ENCODE measurements at regions of chr9 and their contacts with region 1.

Region 1: DNA sequence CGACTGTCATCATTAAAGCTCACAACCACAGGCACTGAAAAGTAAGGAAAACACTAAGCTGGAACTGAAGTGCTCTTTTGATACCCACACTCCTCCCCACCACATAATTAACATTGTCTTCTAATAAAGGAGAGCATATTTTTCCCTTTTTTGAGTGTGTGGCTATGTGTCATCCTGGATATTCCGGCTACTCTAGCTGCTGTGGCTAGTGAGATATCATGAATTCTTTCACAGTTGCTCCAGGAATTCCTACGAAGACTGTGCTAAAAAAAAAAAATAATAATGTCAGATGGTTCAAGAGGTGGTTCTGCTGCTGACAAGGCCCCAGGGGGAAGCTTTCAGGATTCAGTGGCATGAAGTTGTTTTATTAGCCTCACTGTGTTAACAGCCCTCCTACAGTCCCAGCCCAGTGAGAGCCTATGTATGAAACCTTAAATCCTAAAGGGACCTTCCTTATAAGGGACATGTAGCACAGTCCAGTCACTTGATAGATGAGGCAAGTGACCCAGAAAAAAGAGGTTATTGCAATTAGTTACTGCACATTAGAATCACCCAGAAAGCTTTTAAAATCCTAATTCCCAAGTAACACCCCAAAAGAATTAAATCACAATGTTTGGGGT is 46.6 kb downstream of the TMEM252 start:
- DNase-seq: no peak
- ATAC-seq: peak; percentile 49
- H3K4me3 ChIP-seq: no peak overlapping the region
- H3K27ac ChIP-seq: peak overlapping the region; percentile 28 to 81
- H3K4me1 ChIP-seq: peaks cover 5 to 6% of the 10 kb centered on the region in 2 donors
- H3K27me3 ChIP-seq: no peaks in the 10 kb centered on the region

Region 2: DNA sequence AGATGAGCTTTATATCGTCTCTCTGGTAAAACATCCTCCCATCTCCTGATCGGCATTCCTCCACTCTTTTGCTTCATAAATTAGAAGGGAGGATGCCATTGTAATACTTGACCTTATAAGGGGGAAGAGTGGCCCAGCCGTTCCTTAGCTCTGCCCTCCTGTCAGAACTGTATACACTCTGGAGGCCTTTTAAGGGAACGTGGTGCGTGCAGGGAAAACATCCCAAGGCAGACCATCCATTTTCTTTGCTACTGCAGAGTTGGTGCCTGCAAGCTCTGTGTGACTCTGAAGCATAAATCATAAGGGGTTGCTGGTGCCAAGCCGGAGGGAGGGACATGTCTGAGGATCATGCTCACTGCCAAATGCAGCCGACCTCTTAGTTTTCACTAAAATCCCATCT is 47.2 kb before region 1 on chr9:
- intact Hi-C with region 1: loop called in 1 of 2 experiments (anchors 10 kb)
- DNase-seq: peak; percentile 68 to 78
- ATAC-seq: peak; percentile 77
- H3K4me3 ChIP-seq: no peak overlapping the region
- H3K27ac ChIP-seq: peak overlapping the region; percentile 73 to 74
- H3K4me1 ChIP-seq: peaks cover 11 to 14% of the 10 kb centered on the region in 2 donors
- H3K27me3 ChIP-seq: no peaks in the 10 kb centered on the region

Region 3: GRCh38 chr9:68462105-68462775 is 31.8 kb before region 1 on chr9:
- intact Hi-C with region 1: loop called in 1 of 2 experiments (anchors 5 kb)
- DNase-seq: no peak
- ATAC-seq: peak; percentile 26
- H3K4me3 ChIP-seq: no peak overlapping the region
- H3K27ac ChIP-seq: peak overlapping the region; percentile 30 to 71
- H3K4me1 ChIP-seq: peaks cover 4% of the 10 kb centered on the region in 2 donors
- H3K27me3 ChIP-seq: no peaks in the 10 kb centered on the region

Region 4: GRCh38 chr9:68546596-68547390 is 52.7 kb after region 1 on chr9:
- intact Hi-C with region 1: no loop called
- DNase-seq: no peak
- ATAC-seq: peak; percentile 71
- H3K4me3 ChIP-seq: no peak overlapping the region
- H3K27ac ChIP-seq: no peak overlapping the region
- H3K4me1 ChIP-seq: peaks cover 0 to under 1% of the 10 kb centered on the region in 2 donors
- H3K27me3 ChIP-seq: no peaks in the 10 kb centered on the region

Region 5: DNA sequence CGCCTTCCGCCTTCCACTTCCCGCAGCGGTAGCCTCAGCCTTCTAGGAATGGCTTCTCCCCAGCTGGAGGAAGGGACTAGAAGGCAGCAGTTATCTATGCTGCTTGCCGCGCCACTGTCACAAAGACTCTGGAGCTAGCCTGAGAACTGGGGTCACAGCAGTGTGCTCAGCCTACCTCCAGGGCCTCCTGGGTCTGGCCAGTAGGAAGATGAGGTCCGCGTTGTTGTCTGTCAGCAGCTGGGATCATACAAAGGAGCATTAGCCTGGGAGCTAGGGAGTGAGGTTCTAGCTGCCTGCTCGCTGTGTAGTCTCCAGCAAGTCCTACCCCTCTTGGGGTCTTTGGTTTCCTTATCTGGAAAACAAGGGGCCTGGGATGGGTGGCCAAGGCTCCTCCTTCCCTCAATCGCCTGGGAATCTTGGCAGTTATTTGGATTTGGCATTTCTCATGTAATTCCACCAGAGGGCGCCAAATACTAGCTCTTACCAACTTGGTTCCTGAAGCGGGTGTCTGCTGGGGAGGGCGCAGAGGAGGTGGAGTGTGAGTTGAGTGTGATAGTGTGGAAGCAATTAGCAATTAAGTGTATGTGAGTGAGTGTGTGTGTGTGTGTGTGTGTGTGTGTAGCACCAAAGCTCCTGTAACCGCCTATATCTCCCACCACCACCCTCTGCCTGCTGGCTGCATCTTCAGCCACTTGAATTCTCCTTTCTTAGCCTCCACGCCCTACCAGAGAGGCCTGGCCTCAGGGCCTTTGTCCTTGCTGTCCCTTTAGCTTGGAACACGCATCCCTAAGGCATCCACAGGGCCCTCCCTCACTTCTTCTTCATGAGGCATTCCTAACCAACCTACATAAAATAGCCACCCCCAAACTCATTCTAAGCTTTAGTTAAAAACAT is 928.1 kb after region 1 on chr9:
- intact Hi-C with region 1: no loop called
- DNase-seq: peak in 1 of 2 donors; percentile 51
- ATAC-seq: peak; percentile 89
- H3K4me3 ChIP-seq: no peak overlapping the region
- H3K27ac ChIP-seq: no peak overlapping the region
- H3K4me1 ChIP-seq: no peaks in the 10 kb centered on the region
- H3K27me3 ChIP-seq: no peaks in the 10 kb centered on the region

Measured in aorta (tissue), 5 donors.